ENCODE measurements at regions of chr1 and their contacts with region 1.

Region 1: DNA sequence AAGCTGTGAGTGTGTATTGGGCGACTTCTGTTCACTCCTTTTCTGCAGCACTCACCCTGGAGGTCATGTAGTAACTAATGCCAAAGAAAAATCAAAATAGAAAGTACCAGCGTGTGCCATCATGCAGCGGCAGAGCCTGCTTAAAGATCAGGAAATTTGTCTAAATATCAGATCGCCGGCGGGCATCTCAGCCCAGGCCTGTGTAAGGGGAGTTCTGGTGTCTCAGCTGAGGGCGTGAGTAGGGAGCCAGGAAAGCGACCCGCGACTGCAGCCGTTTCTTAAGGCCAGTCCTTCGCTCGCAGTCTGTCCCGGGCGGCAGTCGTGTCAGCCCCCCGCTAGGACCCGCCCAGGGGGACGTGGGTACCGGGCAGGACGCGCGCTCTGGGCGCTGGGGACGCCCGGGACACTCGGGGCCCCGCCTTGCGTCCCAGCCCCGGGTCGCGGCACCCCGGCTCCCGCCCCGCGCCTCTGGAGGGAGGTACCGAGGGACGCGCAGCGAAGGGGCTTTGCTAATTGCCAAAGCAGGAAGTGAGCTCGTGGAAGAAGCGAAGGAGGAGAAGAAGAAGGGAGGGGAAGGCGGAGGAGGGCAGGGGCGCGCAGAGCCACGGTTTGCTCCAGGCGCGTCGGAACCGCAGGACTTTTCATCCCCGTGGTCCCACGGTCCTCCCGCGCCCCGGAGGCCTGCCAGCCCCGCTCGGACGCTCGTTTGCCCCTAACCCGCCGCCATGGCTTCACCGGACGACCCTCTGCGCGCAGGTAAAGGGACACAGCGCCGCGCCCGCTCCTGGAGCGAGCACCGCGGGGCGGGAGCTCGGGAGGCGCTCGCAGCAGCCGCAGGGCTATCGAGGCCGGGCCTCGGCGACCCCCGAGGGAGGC is 1.1 kb downstream of the EDARADD start:
- DNase-seq: peak; percentile 56 to 68 (median 60)
- H3K4me3 ChIP-seq: peak overlapping the region; percentile 47 to 71
- H3K4me3 Mint-ChIP-seq: peak overlapping the region; percentile 89 to 96 (median 93)
- H3K27ac ChIP-seq: peak overlapping the region; percentile 67
- H3K27ac Mint-ChIP-seq: peak overlapping the region; percentile 68 to 95 (median 86)
- H3K4me1 ChIP-seq: peaks cover 20% of the 10 kb centered on the region
- H3K4me1 Mint-ChIP-seq: peaks cover 19 to 51% (median 34%) of the 10 kb centered on the region in 4 donors
- H3K27me3 ChIP-seq: no peaks in the 10 kb centered on the region
- H3K27me3 Mint-ChIP-seq: peaks cover 4 to 17% of the 10 kb centered on the region in 2 donors

Region 2: GRCh38 chr1:235843461-235843961 is 551.6 kb before region 1 on chr1:
- CTCF ChIA-PET with region 1: no interaction called
- POLR2A ChIA-PET with region 1: no interaction called
- intact Hi-C with region 1: no loop called
- DNase-seq: peak in 1 of 5 donors; percentile 8
- H3K4me3 ChIP-seq: no peak overlapping the region
- H3K4me3 Mint-ChIP-seq: no peak overlapping the region
- H3K27ac ChIP-seq: no peak overlapping the region
- H3K27ac Mint-ChIP-seq: no peak overlapping the region
- H3K4me1 ChIP-seq: peaks cover 13% of the 10 kb centered on the region
- H3K4me1 Mint-ChIP-seq: peaks cover 37 to 54% (median 41%) of the 10 kb centered on the region in 4 donors
- H3K27me3 ChIP-seq: no peaks in the 10 kb centered on the region
- H3K27me3 Mint-ChIP-seq: no peaks in the 10 kb centered on the region

Region 3: DNA sequence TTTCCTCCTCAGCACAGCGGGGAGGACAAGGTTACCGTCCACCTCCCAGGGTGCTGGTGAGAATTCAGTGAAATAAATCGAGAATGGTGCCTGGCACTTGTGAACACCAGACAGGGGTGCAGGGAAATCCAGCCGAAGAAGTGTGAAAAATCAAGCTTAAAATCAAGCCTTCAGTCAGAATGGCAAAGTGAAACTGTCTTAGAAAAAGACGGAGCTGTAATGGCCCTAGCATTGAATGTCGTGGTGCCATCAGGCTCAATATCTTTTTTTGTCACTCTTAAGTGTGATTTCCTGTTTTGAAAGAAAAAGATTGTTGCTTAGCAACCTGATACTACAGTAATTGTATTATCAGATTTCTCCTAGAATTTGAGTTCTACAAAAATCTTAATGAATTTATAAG is 21.0 kb after region 1 on chr1:
- CTCF ChIA-PET with region 1: interaction called, 5 read pairs
- POLR2A ChIA-PET with region 1: interaction called, 46 read pairs
- intact Hi-C with region 1: loop called (anchors 1 kb)
- DNase-seq: peak; percentile 73 to 86 (median 82)
- H3K4me3 ChIP-seq: peak overlapping the region; percentile 45 to 49
- H3K4me3 Mint-ChIP-seq: peak overlapping the region; percentile 63 to 89 (median 80)
- H3K27ac ChIP-seq: peak overlapping the region; percentile 83
- H3K27ac Mint-ChIP-seq: peak overlapping the region; percentile 88 to 99 (median 97)
- H3K4me1 ChIP-seq: peaks cover 25% of the 10 kb centered on the region
- H3K4me1 Mint-ChIP-seq: peaks cover 18 to 27% (median 25%) of the 10 kb centered on the region in 4 donors
- H3K27me3 ChIP-seq: no peaks in the 10 kb centered on the region
- H3K27me3 Mint-ChIP-seq: no peaks in the 10 kb centered on the region

Region 4: GRCh38 chr1:236659792-236660587 is 264.8 kb after region 1 on chr1:
- CTCF ChIA-PET with region 1: no interaction called
- POLR2A ChIA-PET with region 1: no interaction called
- intact Hi-C with region 1: no loop called
- DNase-seq: no peak
- H3K4me3 ChIP-seq: no peak overlapping the region
- H3K4me3 Mint-ChIP-seq: no peak overlapping the region
- H3K27ac ChIP-seq: no peak overlapping the region
- H3K27ac Mint-ChIP-seq: no peak overlapping the region
- H3K4me1 ChIP-seq: no peaks in the 10 kb centered on the region
- H3K4me1 Mint-ChIP-seq: peaks cover 4 to 12% (median 8%) of the 10 kb centered on the region in 4 donors
- H3K27me3 ChIP-seq: no peaks in the 10 kb centered on the region
- H3K27me3 Mint-ChIP-seq: peaks cover 8 to 12% of the 10 kb centered on the region in 2 donors

Measured in CD4-positive, alpha-beta memory T cell (primary cell).